OCI-LY7 (cell line): ENCODE measurements at regions of chr2 and their contacts with region 1.

Region 1: DNA sequence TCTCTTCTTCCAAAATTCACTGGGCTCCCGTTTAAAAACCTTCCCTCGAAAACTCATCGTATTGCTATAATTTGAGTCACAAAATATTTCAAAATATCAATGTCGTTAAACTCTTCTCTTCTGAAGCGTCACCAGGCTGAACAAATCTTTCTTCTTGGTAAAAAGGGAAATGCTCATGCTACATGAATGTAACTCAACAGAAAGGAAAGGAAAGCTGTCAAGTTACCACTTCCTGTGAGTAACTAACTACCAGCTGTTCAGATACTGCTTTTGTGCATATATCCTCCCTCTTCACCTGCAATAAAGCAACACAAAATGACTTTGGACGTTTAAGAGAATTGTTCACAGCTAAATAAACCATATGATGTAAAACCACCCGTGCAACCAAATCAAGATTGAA is 95.4 kb downstream of the DOCK10 start:
- DNase-seq: peak; percentile 86
- H3K4me3 ChIP-seq: peak overlapping the region; percentile 83
- H3K27ac ChIP-seq: peak overlapping the region; percentile 92
- H3K4me1 ChIP-seq: peaks cover 80% of the 10 kb centered on the region
- CTCF ChIP-seq: no peak

Region 2: DNA sequence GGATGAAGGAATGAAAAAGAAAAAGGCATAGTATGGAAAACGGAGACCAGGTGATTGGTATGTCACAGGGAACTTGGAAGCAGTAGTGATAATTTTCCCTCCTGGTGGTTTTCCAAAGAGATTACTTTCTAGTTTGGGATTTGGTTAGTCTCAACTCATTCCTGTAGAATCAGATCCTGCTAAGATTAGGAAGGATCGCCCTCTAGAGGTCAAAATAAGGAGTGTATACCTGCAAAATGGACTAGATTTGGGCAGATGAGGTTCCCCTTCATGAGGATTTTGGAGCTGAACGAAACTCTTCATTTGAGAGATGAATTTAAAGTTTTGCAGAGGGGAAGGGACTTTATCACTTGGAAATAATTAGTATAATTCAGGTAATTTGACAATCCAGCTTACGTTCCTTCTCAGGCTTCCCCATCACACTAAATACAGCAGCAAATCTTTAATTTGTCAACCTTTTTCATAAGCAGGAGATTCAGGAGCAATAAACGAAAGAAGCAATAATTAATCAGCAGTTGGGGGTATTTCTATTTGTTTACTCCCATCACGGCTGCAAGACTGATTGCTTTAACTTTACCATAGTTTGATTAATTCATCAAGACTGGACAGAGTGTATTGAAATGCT is 296.0 kb before region 1 on chr2:
- CTCF ChIA-PET with region 1: no interaction called
- POLR2A ChIA-PET with region 1: no interaction called
- intact Hi-C with region 1: no loop called
- DNase-seq: peak; percentile 85
- H3K4me3 ChIP-seq: peak overlapping the region; percentile 38
- H3K27ac ChIP-seq: peak overlapping the region; percentile 34
- H3K4me1 ChIP-seq: peaks cover 35% of the 10 kb centered on the region
- CTCF ChIP-seq: peak; percentile 98

Region 3: DNA sequence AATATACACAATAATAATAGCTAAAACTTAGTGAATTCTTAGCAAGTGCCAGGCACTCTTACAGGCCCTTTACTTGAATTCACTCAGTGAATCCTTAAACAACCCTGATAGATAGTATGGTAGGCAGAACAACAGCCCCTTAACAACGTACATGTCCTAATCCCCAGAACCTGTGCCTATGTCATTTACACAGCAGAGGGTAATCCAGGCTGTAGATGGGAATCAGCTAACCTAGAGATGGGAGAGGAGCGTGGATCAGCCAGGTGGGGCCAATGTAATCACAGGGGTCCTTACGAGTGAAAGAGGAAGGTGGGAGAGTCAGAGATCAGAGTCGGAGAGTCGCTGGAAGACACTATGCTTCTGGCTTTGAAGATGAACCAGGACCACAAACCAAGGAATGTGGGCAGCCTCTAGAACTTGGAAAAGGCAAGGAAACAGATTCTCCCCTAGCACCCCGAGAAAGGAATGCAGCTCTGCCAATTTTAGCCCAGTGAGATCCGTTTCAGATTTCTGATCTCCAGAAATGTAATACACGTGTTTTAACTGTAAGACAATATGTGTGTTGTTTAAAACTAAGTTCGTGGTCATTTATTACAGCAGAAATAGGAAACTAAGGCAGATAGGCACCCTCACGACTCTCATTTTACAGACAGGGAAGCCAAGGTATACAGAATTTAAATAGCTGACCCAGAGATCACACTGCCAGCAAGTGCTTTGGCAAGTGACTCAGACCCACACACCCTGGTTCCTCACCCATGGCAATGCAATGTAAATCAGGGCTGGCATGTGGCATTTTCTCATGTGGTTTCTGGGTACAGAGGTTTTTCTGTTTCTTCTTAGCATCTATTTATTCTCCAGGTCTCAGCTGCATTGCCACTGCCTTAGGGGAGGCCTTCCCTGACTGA is 26.5 kb after region 1 on chr2:
- CTCF ChIA-PET with region 1: no interaction called
- POLR2A ChIA-PET with region 1: interaction called, 10 read pairs
- intact Hi-C with region 1: no loop called
- DNase-seq: no peak
- H3K4me3 ChIP-seq: peak overlapping the region; percentile 5
- H3K27ac ChIP-seq: no peak overlapping the region
- H3K4me1 ChIP-seq: peaks cover 50% of the 10 kb centered on the region
- CTCF ChIP-seq: no peak

Region 4: GRCh38 chr2:225041851-225042799 is 95.2 kb after region 1 on chr2 and contains the start of gene DOCK10:
- CTCF ChIA-PET with region 1: no interaction called
- POLR2A ChIA-PET with region 1: interaction called, 10 read pairs
- intact Hi-C with region 1: no loop called
- DNase-seq: peak; percentile 66
- H3K4me3 ChIP-seq: peak within 1 kb of the TSS; percentile 85
- H3K27ac ChIP-seq: peak within 1 kb of the TSS; percentile 51
- H3K4me1 ChIP-seq: peaks cover 17% of the 10 kb centered on the region
- CTCF ChIP-seq: peak; percentile 34
- total RNA-seq, gene DOCK10: 40.8 and 51.5 TPM in 2 replicates